PC-3 (cell line): ENCODE measurements at regions of chr5 and their contacts with region 1.

Region 1: GRCh38 chr5:106397700-106398099 is 1273.0 kb downstream of the EFNA5 start:
- DNase-seq: peak; percentile 95
- ATAC-seq: peak; percentile 92
- H3K4me3 ChIP-seq: no peak overlapping the region
- H3K27ac ChIP-seq: peak overlapping the region; percentile 84
- H3K4me1 ChIP-seq: peaks cover 57% of the 10 kb centered on the region
- H3K27me3 ChIP-seq: no peaks in the 10 kb centered on the region
- CTCF ChIP-seq: no peak

Region 2: DNA sequence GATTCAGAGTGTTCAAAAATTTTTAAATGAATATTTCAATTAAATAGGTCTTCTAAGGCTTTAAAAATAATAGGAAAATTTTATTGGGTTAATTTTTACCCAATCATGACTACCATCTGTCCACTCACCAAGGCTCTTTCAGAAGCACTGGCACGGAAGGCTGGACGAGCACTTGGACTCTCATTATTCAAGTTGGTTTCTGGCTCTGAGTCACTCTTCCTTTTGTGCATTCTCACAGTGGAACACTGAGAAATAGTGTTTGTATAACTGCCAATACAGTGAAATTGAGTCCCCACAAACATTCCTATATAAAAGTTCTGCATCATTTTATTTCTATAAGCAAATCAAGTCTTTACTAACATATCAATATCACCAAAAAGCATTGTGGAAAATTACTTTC is 124.0 kb after region 1 on chr5:
- CTCF ChIA-PET with region 1: no interaction called
- POLR2A ChIA-PET with region 1: no interaction called
- intact Hi-C with region 1: loop called (anchors 2 kb)
- DNase-seq: peak; percentile 90
- ATAC-seq: peak; percentile 93
- H3K4me3 ChIP-seq: no peak overlapping the region
- H3K27ac ChIP-seq: peak overlapping the region; percentile 75
- H3K4me1 ChIP-seq: peaks cover 31% of the 10 kb centered on the region
- H3K27me3 ChIP-seq: no peaks in the 10 kb centered on the region
- CTCF ChIP-seq: no peak

Region 3: DNA sequence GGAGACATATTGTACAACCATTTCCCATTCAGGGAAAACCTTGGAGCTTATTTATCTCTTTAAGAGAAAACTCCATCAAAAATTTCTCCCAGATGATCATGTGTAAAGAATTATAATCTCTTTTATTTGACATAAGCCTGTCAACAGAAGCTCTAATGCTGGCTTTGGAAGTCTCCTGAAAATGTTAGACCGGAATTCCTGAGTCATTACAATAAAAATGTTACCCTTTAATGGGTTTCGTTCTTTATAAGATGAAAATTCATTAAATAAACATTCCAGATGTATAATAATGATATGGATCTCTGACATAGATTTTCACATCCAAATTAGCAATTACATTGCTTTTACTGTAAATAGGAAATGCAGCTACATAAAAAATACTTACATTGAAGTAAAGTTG is 236.7 kb after region 1 on chr5:
- CTCF ChIA-PET with region 1: no interaction called
- POLR2A ChIA-PET with region 1: no interaction called
- intact Hi-C with region 1: loop called (anchors 5 kb)
- DNase-seq: peak; percentile 79
- ATAC-seq: peak; percentile 79
- H3K4me3 ChIP-seq: peak overlapping the region; percentile 20; the same call in 1 of the 2 replicates
- H3K27ac ChIP-seq: peak overlapping the region; percentile 41
- H3K4me1 ChIP-seq: peaks cover 22% of the 10 kb centered on the region
- H3K27me3 ChIP-seq: no peaks in the 10 kb centered on the region
- CTCF ChIP-seq: no peak